A673 (cell line): ENCODE measurements at regions of chr1 and their contacts with region 1.

Region 1: DNA sequence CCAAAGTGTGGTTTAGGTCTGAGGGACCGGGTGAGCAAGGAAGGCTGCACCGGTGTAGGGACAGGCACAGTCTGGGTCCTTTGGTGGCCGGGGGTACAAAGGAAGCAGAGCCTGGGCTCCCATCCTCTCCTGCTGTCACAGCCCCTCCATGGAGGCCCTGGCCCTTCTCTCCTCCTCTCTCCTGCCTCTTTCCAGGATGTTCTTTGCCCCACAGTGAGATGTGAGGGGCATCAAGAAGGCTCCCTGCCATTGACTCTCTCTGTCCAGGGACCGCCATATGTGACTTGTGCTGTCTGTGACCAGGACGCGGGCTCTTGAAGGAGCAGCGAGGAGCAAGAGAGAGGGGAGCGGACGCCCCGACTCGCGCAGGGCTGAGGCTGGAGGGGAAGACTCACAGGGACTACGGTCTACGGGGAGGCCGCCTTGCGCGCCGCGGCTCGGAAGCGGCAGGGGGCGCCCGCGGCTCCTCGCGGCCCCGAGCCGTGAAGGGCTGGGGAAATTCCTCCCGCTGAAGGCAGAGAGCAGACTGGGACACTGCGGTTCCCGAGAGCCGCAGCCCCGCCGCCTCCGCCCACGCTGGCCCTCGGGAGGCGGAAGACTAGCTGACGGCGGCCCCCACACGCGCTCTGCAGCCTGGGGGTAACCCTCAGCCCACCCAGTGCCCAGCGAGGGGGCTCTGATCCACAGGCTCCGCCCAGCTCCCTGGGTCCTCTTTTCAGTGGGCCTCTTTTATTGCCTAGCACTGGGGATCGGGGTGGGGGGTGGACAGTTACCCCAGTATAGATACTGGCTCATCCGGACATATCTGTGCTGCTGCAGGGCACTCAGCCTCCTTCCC is 40.8 kb downstream of the MAB21L3 start:
- DNase-seq: peak; percentile 93
- H3K4me3 ChIP-seq: peak overlapping the region; percentile 40
- H3K27ac ChIP-seq: peak overlapping the region; percentile 86
- H3K4me1 ChIP-seq: peaks cover 20% of the 10 kb centered on the region
- H3K27me3 ChIP-seq: no peaks in the 10 kb centered on the region
- CTCF ChIP-seq: peak; percentile 91

Region 2: DNA sequence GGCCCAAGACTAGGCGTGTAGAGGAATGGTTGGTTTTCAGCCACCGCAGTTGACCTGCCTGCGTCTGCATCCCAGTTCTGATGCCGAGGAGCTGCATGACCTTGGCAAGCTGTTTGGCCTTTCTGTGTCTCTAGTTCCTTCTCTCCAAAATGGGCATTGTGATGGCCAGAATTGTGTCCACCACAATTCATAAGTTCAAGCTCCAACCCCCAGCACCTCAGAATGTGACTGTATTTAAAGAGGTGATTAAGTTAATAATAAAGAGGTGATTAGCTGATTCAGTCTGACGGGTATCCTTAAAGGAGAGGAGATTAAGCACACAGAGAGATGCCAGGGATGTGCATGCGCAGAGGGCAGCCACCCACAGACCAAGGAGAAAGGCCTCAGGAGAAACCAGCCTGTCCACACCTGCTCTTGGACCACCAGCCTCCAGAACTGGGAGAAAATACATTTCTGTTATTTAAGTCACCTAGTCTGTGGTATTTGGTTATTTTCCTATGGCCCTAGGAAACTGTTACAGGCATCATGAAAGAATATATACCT is 12.3 kb before region 1 on chr1:
- CTCF ChIA-PET with region 1: interaction called, 19 read pairs
- POLR2A ChIA-PET with region 1: no interaction called
- intact Hi-C with region 1: no loop called
- DNase-seq: no peak
- H3K4me3 ChIP-seq: no peak overlapping the region
- H3K27ac ChIP-seq: peak overlapping the region; percentile 54
- H3K4me1 ChIP-seq: peaks cover 8% of the 10 kb centered on the region
- H3K27me3 ChIP-seq: no peaks in the 10 kb centered on the region
- CTCF ChIP-seq: no peak

Region 3: GRCh38 chr1:116194568-116195474 is 42.9 kb after region 1 on chr1:
- CTCF ChIA-PET with region 1: no interaction called
- POLR2A ChIA-PET with region 1: no interaction called
- intact Hi-C with region 1: no loop called
- DNase-seq: no peak
- H3K4me3 ChIP-seq: no peak overlapping the region
- H3K27ac ChIP-seq: no peak overlapping the region
- H3K4me1 ChIP-seq: peaks cover 3% of the 10 kb centered on the region
- H3K27me3 ChIP-seq: no peaks in the 10 kb centered on the region
- CTCF ChIP-seq: no peak

Region 4: DNA sequence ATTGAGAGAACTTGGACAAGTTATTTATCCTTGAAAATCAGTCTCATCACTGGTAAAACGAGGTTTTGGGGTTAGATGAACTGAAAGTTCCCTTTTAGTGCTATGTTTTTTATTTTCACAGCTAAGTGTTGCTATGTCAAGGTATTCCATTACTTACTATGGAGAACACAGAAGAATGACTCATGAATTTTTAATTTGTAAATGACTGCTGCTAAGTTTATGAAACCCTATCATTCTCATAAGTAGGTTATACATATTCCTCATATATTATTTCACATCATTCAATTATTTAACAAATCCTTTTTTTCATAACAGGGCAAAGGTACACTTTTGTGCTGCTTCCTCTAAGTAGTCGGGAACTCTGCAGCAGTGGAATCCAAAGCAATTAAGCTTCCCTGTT is 168.9 kb after region 1 on chr1:
- CTCF ChIA-PET with region 1: interaction called, 11 read pairs
- POLR2A ChIA-PET with region 1: no interaction called
- intact Hi-C with region 1: no loop called
- DNase-seq: no peak
- H3K4me3 ChIP-seq: no peak overlapping the region
- H3K27ac ChIP-seq: no peak overlapping the region
- H3K4me1 ChIP-seq: peaks cover 7% of the 10 kb centered on the region
- H3K27me3 ChIP-seq: no peaks in the 10 kb centered on the region
- CTCF ChIP-seq: no peak

Region 5: DNA sequence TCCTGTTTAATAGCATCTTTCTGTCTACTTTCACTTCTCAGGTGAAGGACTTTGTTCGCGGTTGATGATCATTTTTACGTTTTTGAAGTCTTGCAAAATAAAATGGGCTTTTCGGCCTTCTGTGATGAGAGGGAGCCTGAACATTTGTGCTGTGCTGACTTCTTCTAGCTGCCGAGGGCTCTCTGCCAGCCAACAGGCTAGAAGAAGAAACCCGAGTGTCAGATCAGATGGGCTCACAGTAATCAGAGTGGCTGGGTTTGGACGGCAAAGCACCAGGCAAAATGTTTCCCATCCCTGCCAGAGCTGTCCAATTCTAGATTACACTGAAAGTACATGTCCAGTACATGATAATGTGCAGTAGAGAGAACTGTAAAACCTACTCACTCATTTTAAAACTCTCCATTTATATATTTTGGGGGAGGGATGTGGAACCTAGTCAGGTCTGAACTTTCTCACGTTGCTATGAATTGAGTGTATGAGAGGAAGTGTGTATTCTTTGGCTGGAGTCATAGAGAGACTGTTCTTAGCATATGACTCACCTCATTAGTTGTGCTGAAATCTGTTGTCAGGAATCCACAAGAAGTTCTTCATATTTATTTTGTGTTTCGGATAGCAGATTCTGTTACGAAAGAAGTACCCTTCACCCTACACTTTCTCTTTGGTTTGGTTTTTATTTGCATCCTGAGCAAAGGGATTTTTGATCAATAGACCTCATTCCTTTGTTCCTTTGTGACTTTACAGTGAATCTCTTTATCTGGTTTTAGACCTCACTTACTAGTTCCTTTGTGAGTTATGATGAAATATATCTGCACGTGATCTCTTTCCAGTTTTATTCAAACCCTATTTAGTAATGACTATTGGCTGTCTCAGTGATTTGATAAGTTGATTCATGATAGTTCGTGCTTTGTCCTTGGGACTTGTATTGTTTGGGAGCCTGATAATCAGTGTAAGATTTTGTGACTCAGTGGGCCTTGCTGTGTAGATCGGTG is 225.9 kb after region 1 on chr1:
- CTCF ChIA-PET with region 1: no interaction called
- POLR2A ChIA-PET with region 1: no interaction called
- intact Hi-C with region 1: loop called (anchors 5 kb)
- DNase-seq: peak; percentile 75
- H3K4me3 ChIP-seq: peak overlapping the region; percentile 91
- H3K27ac ChIP-seq: peak overlapping the region; percentile 97
- H3K4me1 ChIP-seq: peaks cover 62% of the 10 kb centered on the region
- H3K27me3 ChIP-seq: no peaks in the 10 kb centered on the region
- CTCF ChIP-seq: no peak

Region 6: GRCh38 chr1:116386042-116386441 is 234.1 kb after region 1 on chr1:
- CTCF ChIA-PET with region 1: interaction called, 21 read pairs
- POLR2A ChIA-PET with region 1: no interaction called
- intact Hi-C with region 1: no loop called
- DNase-seq: no peak
- H3K4me3 ChIP-seq: no peak overlapping the region
- H3K27ac ChIP-seq: peak overlapping the region; percentile 22
- H3K4me1 ChIP-seq: peaks cover 85% of the 10 kb centered on the region
- H3K27me3 ChIP-seq: no peaks in the 10 kb centered on the region
- CTCF ChIP-seq: no peak